ENCODE measurements at regions of chr2 and their contacts with region 1.

Region 1: GRCh38 chr2:63050334-63051041 is at the start of gene OTX1:
- DNase-seq: peak in 1 of 9 donors; percentile 52
- ATAC-seq: peak; percentile 49
- H3K4me3 ChIP-seq: peak within 1 kb of the TSS; percentile 52
- H3K4me3 Mint-ChIP-seq: peak within 1 kb of the TSS; percentile 83 to 93 (median 86)
- H3K27ac ChIP-seq: no peak within 1 kb of the TSS
- H3K27ac Mint-ChIP-seq: peak within 1 kb of the TSS in 1 of 9 donors; percentile 69
- H3K4me1 ChIP-seq: peaks cover 26 to 35% of the 10 kb centered on the region in 2 donors
- H3K4me1 Mint-ChIP-seq: peaks cover 41 to 80% (median 68%) of the 10 kb centered on the region in 7 donors
- H3K27me3 ChIP-seq: peaks cover 10 to 24% of the 10 kb centered on the region in 2 donors
- H3K27me3 Mint-ChIP-seq: peaks cover 65 to 88% (median 82%) of the 10 kb centered on the region in 5 donors
- total RNA-seq, gene OTX1: not detected

Region 2: DNA sequence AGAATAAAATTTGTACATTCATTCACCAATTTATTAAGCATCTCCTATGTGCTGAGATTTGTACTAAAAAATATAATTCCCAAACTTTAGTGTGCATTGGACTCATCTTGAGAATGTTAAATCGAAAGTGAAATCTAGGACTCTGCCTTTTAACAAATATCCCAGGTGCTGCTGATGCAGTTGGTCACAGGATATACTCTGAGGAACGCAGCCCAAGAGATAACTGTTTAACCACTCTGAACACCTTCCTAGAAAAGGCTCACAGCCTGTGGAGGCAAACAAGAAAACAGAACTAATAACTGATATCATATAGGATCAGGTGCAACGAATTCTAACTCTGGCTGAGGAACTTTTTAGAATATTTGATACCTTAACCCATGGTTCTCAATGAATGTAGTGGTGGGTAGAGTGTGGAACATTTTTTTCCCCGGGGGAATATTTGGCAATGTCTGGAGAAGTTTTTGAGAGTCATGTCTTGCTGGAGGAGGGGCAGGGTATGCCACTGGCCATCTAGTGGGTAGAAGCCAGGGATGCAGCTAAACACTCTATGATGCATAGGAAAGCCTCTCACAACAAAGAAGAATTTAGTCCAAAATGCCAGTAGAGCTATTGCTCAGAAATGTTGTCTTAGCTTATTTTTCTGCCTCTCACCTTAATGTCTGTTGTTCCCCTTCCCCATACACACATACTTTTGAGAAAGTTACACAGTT is 248.5 kb before region 1 on chr2:
- CTCF ChIA-PET with region 1: no interaction called
- POLR2A ChIA-PET with region 1: no interaction called
- intact Hi-C with region 1: loop called in 1 of 2 experiments (anchors 10 kb)
- DNase-seq: peak in 1 of 9 donors; percentile 2
- ATAC-seq: no peak
- H3K4me3 ChIP-seq: peak overlapping the region; percentile 34
- H3K4me3 Mint-ChIP-seq: peak overlapping the region; percentile 0 to 75 (median 59)
- H3K27ac ChIP-seq: no peak overlapping the region
- H3K27ac Mint-ChIP-seq: peak overlapping the region in 5 of 9 donors; percentile 23 to 71 (median 58)
- H3K4me1 ChIP-seq: peaks cover 0 to 10% of the 10 kb centered on the region in 2 donors
- H3K4me1 Mint-ChIP-seq: peaks cover 10 to 36% (median 27%) of the 10 kb centered on the region in 7 donors
- H3K27me3 ChIP-seq: no peaks in the 10 kb centered on the region
- H3K27me3 Mint-ChIP-seq: no peaks in the 10 kb centered on the region

Region 3: DNA sequence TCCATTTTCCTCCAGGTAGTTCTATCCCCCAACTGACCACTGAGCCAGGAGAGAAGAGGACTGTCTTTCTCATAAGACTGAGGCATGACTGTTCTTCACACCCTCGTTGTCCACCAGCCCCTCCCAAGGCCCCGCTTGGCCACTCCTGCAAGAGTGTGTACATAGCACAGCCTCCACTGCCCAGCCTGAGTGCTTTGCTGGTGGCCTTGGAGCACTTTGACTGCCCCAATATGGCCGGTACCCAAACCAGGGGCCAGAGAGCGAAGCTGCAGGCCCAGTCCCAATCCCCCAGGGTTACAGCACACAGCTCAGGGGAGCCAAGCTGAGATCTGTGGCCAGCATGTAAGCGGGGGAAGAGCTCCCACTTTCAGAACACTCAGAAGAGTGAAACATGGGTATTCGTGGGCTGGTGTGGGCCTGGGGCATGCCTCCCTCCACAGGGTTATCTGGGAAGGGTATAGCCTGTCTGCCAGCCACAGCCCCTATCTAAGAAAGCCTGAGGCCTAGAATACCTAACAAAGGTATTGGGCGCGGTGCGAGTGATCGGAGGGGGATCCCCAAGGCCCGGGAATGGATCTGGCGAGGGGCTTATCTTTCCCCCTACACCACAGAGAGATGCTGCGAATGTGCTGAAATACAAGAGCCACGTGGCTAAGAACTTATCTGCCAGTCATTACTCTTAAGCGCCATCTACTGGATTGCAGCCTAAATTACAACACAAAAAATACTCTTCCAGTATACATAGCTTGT is 374.0 kb after region 1 on chr2:
- CTCF ChIA-PET with region 1: no interaction called
- POLR2A ChIA-PET with region 1: no interaction called
- intact Hi-C with region 1: loop called in 1 of 2 experiments (anchors 10 kb)
- DNase-seq: peak in 6 of 9 donors; percentile 2 to 28 (median 14)
- ATAC-seq: peak; percentile 60
- H3K4me3 ChIP-seq: no peak overlapping the region
- H3K4me3 Mint-ChIP-seq: no peak overlapping the region
- H3K27ac ChIP-seq: no peak overlapping the region
- H3K27ac Mint-ChIP-seq: no peak overlapping the region
- H3K4me1 ChIP-seq: no peaks in the 10 kb centered on the region
- H3K4me1 Mint-ChIP-seq: peaks cover 0 to 3% (median 0%) of the 10 kb centered on the region in 7 donors
- H3K27me3 ChIP-seq: no peaks in the 10 kb centered on the region
- H3K27me3 Mint-ChIP-seq: peaks cover 0 to 2% (median 0%) of the 10 kb centered on the region in 5 donors